Lower leg skin (tissue), 4 donors: ENCODE measurements at regions of chr17 and their contacts with region 1.

Region 1: DNA sequence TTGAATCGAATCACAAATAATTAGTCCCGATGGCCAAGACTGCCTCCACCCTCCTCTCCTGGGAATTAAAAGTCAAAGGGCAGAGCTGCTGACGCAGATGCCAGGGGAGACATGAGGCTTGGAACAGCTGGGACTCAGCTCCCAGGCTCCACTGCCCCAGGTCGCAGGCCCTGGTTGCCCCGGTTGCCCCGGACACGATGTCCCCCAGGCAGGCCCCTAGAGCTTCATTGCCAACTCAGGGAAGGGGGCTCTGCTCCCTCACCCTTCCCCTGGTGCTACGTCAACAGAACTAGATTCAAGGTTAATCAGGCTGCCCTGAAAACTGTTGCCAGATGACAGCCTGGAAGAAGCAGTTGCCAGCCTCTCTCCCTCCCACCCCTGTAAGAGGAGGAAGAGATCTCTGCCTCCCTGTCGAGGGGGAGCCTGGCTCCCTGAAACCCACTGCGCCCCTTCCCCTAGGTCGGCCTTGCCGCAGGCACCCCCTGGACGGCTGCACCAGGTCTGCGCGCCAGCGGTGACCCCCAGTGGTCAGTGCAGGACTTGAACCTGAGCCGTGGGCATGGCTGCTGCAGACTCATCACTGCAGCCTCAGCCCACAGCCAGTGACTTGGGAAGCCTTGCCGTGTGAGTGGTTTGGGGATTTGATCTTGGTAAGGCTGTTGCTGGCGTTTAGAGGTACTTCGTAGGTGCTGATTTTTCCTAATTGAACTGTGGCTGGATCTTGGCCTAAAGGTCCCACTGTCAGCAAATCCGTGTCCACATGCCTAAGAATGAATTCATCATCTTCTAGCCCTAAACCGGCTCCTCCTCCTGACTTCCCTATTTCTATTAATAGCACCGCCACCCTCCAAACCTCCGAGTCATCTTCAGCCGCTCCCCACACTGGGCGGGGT is 84.1 kb upstream of the TOB1 start:
- DNase-seq: peak; percentile 90 to 96
- H3K4me3 ChIP-seq: no peak overlapping the region
- CTCF ChIP-seq: no peak
- POLR2A ChIP-seq: no peak

Region 2: DNA sequence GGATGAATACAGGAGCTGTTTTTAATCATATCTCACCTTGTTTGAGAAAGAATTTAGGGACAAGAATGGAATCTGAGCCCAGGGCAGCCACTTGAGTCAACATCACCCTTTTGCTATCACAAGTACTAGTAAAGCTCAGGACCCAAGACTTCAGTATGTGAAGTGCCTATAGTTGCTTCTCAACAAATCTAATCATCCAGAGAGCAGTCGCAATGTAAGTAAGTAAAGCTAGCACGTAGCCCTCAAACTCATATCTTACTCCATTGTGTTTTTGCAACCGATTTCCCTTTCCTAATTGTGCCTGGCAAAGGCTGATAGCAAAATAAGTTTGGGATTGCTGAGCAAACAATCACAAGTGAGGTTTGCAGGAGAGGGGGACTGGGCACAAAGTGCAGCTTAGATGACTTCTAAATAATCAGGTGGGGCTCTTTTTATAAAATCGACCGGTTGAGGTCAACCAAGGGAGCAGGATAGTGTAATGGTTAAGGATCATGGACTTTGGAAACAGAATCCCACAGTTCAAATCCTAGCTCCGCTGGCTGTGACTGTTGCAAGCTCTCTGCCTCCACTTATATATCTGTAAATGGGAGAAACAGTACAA is 97.1 kb before region 1 on chr17:
- intact Hi-C with region 1: loop called (anchors 5 kb)
- DNase-seq: no peak
- H3K4me3 ChIP-seq: no peak overlapping the region
- CTCF ChIP-seq: no peak
- POLR2A ChIP-seq: no peak

Region 3: GRCh38 chr17:50865984-50866774 is 84.1 kb before region 1 on chr17 and contains the start of gene TOB1:
- intact Hi-C with region 1: loop called (anchors 5 kb)
- DNase-seq: peak; percentile 97 to 99
- H3K4me3 ChIP-seq: peak within 1 kb of the TSS; percentile 89
- CTCF ChIP-seq: no peak
- POLR2A ChIP-seq: peak in 1 of 2 donors; percentile 100
- total RNA-seq, gene TOB1: 130 to 156 (median 142) TPM

Region 4: DNA sequence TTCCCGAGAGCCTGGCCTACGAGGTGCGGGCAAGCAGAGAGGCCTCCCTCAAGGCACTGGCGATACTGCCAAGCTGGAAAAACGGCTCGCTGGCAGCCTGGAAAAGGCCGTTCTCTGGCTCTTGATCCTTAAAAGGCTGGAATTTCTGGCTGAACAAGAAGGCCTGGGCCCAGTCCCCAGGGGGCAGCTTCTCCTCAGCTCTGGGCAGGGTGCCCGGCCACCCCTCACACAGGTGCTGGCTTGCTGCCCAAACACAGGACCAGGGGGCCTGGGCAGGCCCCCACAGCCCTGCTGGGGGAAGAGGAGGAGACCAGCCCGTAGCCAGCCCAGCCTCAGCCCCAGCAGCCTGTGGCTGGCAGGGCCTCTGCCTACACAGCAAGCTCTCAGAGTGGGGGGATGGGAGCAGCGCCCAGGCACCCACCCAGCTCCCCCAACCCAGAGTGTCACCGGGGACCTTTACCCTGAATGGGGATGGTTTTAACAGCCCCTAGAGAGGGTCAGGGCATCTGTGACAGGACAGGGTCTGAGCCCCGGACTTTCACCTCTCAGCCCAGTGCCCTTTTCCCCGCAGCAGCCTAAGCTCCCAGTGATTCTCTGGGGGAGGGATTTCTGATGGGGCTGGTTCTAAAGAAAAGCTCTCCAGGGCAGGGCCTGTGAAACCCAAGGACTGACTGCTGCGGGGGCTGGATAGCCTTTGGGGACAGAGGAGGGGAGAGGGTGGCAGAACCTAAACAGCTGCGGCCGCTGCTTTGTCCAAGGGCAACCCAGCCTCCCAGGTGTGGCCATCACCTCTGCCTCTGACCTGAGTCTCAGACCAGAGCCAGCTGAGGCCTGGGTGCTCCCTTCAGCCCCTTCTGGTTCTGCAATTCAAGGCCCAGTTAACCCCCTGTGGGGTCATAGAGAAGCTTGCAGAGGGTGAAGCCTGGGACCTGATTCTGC is 45.4 kb before region 1 on chr17:
- intact Hi-C with region 1: no loop called
- DNase-seq: peak; percentile 33 to 91
- H3K4me3 ChIP-seq: no peak overlapping the region
- CTCF ChIP-seq: no peak
- POLR2A ChIP-seq: no peak